ENCODE measurements at regions of chr9 and their contacts with region 1.

Region 1: GRCh38 chr9:35111001-35111933 is 4.4 kb downstream of the ATOSB start:
- DNase-seq: peak; percentile 98
- ATAC-seq: peak; percentile 82
- H3K4me3 Mint-ChIP-seq: peak overlapping the region; percentile 63
- H3K27ac Mint-ChIP-seq: peak overlapping the region; percentile 90
- H3K4me1 Mint-ChIP-seq: peaks cover 48% of the 10 kb centered on the region
- H3K27me3 Mint-ChIP-seq: no peaks in the 10 kb centered on the region

Region 2: DNA sequence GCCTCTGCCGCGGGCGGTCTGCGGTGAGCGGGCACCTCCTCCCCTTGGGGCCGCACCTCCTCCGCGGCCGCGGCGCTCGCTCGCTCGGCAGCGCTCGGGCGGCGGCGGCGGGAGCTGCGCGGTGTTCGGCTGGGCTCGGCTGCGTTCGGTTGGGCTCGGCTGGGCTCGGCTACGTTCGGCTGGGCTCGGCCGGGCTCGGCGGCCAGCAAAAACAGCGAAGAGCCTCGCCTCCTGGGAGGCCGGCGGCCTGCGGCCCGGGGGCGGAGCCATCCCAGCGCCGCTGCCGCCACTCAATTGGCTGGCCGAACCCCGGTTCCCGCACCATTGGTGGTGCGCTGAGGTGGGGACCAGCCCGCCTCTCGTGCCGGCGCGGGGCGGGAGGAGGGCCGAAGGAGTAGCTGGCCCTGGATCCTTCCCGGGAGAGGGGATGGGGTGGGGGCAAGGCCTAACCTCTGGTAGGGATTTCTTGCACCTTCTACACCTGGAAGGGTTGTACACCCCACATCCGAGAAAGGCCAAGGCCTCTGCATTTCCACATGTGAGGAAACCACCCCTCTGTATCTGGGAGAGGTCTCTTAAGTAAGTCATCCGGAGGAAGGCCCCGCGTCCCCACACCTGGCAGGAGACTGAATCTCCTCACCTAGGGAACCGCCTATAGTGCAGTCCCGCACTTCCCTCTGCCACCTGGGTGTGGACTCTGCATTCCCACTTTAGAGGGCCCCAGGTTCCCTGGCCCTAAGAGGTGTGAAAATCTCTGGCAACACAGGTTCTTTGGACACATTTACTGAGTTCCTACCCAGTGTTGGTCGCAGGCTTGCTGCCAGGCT is 588.1 kb before region 1 on chr9 and contains the start of gene ENHO:
- CTCF ChIA-PET with region 1: no interaction called
- POLR2A ChIA-PET with region 1: no interaction called
- intact Hi-C with region 1: loop called in 1 of 2 experiments (anchors 5 kb)
- DNase-seq: peak; percentile 93
- ATAC-seq: peak; percentile 99
- H3K4me3 Mint-ChIP-seq: peak within 1 kb of the TSS; percentile 54
- H3K27ac Mint-ChIP-seq: no peak within 1 kb of the TSS
- H3K4me1 Mint-ChIP-seq: peaks cover 24% of the 10 kb centered on the region
- H3K27me3 Mint-ChIP-seq: peaks cover 11% of the 10 kb centered on the region
- total RNA-seq, gene ENHO: not detected

Region 3: GRCh38 chr9:34994900-34995669 is 116.2 kb before region 1 on chr9:
- CTCF ChIA-PET with region 1: no interaction called
- POLR2A ChIA-PET with region 1: no interaction called
- intact Hi-C with region 1: no loop called
- DNase-seq: no peak
- ATAC-seq: no peak
- H3K4me3 Mint-ChIP-seq: no peak overlapping the region
- H3K27ac Mint-ChIP-seq: no peak overlapping the region
- H3K4me1 Mint-ChIP-seq: peaks cover 54% of the 10 kb centered on the region
- H3K27me3 Mint-ChIP-seq: no peaks in the 10 kb centered on the region

Region 4: DNA sequence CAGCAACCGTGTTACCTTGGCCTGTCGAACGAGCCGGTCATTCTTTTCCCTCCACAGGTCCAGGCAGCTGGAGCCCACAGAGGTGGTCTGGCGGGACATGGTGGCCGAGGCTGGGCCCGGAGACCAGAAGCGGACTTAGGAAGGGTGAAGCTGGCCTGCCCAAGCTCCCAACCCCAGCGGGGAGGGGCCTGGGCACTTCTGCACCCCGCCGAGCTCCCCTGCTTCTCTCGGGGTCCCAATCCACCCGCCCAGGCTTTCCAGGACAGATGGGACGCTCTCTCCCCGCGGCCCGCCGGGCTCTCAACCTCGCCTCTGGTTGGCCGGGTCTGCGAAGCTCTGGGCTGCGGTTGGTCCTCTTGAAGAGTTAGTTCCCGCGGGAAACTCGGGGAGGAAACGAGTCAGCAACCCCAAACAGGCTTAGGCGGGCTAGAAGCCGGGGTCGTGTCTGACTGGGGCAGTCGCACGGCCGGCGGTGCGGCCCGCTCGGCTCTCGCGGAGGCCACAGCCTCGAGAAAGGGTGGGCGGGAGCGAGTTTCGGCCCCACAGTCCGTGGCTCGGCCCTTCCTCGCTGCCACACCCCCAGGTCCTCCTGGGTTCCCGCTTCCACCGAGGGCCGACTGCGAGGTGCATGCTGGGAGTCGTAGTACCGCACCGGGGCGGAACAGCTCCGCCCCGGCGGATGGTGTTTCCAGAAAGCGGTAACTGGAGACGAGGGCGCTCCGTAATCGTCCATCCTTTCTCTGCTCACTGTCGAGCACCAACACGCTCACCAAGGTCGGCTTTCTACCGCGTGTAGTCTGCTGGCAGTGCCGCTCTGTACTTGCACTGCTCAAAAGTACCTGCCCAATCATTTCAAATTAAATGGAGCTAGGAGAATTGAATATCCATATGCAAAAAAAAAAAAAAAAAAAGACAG is 31.6 kb before region 1 on chr9 and contains the start of gene FANCG:
- CTCF ChIA-PET with region 1: interaction called, 4 read pairs
- POLR2A ChIA-PET with region 1: interaction called, 5 read pairs
- intact Hi-C with region 1: loop called in 1 of 2 experiments (anchors 1 kb)
- DNase-seq: peak; percentile 93
- ATAC-seq: peak; percentile 94
- H3K4me3 Mint-ChIP-seq: peak within 1 kb of the TSS; percentile 81
- H3K27ac Mint-ChIP-seq: peak within 1 kb of the TSS; percentile 96
- H3K4me1 Mint-ChIP-seq: peaks cover 16% of the 10 kb centered on the region
- H3K27me3 Mint-ChIP-seq: no peaks in the 10 kb centered on the region
- total RNA-seq, gene FANCG: 92.8 to 93.4 TPM

Region 5: GRCh38 chr9:35161713-35162604 is 50.7 kb after region 1 on chr9 and contains the start of gene UNC13B:
- CTCF ChIA-PET with region 1: interaction called, 10 read pairs
- POLR2A ChIA-PET with region 1: interaction called, 3 read pairs
- intact Hi-C with region 1: loop called (anchors 1 to 5 kb)
- DNase-seq: peak; percentile 85
- ATAC-seq: peak; percentile 93
- H3K4me3 Mint-ChIP-seq: peak within 1 kb of the TSS; percentile 84
- H3K27ac Mint-ChIP-seq: peak within 1 kb of the TSS; percentile 4
- H3K4me1 Mint-ChIP-seq: peaks cover 22% of the 10 kb centered on the region
- H3K27me3 Mint-ChIP-seq: no peaks in the 10 kb centered on the region
- total RNA-seq, gene UNC13B: 2.7 to 4.0 TPM

Region 6: DNA sequence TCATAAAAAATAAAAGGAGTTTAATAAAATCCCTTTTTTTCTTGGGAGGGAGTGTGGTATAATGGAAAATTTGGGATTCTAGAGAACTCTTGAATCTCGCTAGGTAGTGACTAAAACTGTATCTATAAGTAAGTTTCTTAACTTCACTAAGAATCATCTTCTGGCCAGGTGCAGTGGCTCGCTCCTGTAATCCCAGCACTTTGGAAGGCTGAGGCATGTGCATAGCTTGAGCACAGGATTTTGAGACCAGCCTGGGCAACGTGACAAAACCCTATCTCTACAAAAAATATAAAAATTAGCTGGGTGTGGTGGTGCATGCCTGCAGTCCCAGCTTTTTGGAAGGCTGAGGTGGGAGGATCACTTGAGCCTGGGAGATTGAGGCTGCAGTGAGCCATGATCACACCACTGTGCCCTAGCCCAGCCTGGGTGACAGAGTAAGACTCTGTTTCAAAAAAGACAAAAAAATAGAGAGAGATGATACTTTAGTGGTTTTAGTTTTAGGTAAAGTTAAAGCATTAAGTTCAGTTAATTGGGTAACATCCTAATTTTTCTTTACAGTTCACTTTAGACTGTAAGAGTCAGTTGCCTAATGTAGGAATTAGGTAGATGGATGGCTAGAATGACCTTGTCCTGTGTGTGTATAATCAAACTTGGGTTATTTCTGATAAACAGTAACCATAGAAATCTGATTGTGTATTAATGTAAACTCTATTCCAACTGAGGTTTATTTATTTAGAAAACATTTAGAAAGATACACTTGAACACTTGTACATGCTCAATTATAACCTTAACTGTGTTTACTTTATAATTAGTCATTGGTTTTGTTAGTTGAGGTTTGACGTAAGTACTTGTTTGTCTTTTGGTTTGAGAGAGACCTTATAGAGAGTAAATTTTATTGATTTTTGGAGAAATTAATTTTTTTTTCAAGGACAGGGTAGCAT is 68.3 kb after region 1 on chr9:
- CTCF ChIA-PET with region 1: no interaction called
- POLR2A ChIA-PET with region 1: no interaction called
- intact Hi-C with region 1: no loop called
- DNase-seq: no peak
- ATAC-seq: no peak
- H3K4me3 Mint-ChIP-seq: no peak overlapping the region
- H3K27ac Mint-ChIP-seq: no peak overlapping the region
- H3K4me1 Mint-ChIP-seq: no peaks in the 10 kb centered on the region
- H3K27me3 Mint-ChIP-seq: peaks cover 9% of the 10 kb centered on the region

Region 7: DNA sequence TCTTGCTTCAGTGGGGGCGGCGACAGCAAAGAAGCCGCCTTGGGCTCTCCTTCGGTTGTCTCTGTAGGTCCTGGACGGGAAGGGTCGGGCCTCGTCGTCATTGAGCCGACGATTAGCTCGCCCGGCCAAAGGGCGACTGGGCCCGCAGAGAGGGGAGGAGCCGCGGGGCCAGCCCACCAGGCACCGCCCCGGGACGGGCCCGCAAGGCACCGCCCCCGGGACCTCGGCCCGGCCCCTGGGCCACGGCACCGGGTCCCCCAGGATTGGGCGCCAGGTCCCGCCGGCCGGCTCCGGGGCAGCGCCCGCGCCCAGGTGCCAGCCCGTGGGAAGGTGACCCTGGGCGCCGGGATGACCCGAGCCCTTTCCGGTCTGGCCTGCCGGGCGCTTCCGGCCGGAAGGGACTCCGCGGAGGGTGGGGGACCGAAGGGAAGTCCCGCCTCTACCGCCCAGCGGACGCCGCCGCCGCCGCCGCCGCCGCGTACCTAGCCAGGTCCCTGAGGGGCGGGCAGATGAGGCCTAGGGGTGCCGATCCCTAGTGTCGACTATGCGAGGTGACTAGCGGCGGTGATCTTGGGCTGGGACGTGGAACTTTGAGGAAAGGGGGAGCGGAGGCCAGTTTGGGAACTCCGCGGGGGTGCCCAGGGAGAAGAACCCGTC is 637.7 kb after region 1 on chr9 and contains the starts of genes GBA2 and RGP1:
- CTCF ChIA-PET with region 1: interaction called, 4 read pairs
- POLR2A ChIA-PET with region 1: no interaction called
- intact Hi-C with region 1: loop called in 1 of 2 experiments (anchors 1 kb)
- DNase-seq: peak; percentile 83
- ATAC-seq: peak; percentile 79
- H3K4me3 Mint-ChIP-seq: peak within 1 kb of the TSS; percentile 93
- H3K27ac Mint-ChIP-seq: peak within 1 kb of the TSS; percentile 88
- H3K4me1 Mint-ChIP-seq: peaks cover 40% of the 10 kb centered on the region
- H3K27me3 Mint-ChIP-seq: no peaks in the 10 kb centered on the region
- total RNA-seq, gene GBA2: 19.6 to 23.7 TPM
- total RNA-seq, gene RGP1: 14.0 to 15.5 TPM